ENCODE measurements at regions of chr17 and their contacts with region 1.

Region 1: DNA sequence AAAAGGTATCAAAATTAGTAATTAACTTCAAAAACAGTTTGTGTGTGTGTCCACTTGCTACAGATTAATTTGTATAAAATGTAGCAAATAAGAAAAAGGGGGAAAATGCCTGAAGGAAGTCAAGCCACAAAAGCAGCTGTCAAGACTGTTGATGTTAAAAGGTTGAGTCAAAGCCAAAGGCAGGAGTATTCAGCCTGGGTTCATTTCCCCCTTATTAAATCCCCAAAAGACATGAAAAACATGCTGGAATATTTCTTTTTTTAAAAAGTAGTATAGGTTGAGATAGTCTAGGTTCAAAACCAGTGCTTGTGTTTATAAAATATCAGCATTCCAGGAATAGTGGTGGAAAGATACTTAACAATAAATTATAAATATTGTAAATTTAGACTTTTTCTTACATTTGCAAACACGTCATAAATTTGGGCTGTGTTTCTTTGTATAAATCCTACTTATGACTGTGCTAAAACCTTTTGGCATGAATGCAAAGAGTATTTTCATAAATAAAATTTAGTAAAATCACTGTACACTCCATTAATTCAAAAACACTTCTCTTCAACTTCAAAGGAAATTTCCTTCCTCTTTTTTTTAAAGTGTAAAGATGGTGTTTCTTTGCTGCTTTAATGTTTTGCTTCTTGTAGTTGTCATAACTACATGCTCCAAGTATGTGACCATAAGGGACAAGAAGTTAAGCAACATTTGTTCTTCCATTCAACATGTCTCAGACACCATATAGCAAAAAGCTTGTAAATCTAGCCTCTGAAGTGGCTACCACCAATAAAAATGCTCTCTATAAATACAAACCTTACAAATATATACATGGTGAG is 72.0 kb downstream of the SKAP1 start:
- DNase-seq: no peak
- H3K4me3 ChIP-seq: no peak overlapping the region
- H3K27ac ChIP-seq: no peak overlapping the region
- H3K4me1 ChIP-seq: no peaks in the 10 kb centered on the region
- H3K27me3 ChIP-seq: peaks cover 2% of the 10 kb centered on the region
- CTCF ChIP-seq: no peak

Region 2: GRCh38 chr17:48134912-48135480 is 223.0 kb before region 1 on chr17:
- CTCF ChIA-PET with region 1: no interaction called
- dilution Hi-C with region 1: no loop called
- in situ Hi-C with region 1: no loop called
- intact Hi-C with region 1: no loop called
- DNase-seq: no peak
- H3K4me3 ChIP-seq: no peak overlapping the region
- H3K27ac ChIP-seq: no peak overlapping the region
- H3K4me1 ChIP-seq: no peaks in the 10 kb centered on the region
- H3K27me3 ChIP-seq: no peaks in the 10 kb centered on the region
- CTCF ChIP-seq: peak in 1 of 2 donors; percentile 18

Region 3: DNA sequence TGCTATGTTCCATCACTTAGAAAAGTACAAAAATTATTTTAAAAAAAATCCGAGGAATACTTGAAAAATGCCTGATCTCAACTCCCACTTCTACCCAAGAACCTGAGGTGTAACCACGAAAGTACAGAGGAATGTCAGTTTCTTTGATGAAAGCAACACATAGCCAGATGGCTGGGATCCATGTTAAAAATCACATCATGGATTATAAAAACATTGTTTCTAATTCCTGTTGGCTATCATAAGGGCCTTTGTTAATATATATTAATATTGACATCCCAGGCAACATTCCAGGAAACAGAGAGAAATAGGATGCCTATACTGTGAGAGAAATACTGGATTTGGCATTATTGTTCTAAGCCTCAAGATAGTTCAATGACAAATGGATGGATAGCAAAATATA is 43.3 kb before region 1 on chr17:
- CTCF ChIA-PET with region 1: no interaction called
- dilution Hi-C with region 1: loop called (anchors 5 kb)
- in situ Hi-C with region 1: no loop called
- intact Hi-C with region 1: no loop called
- DNase-seq: no peak
- H3K4me3 ChIP-seq: no peak overlapping the region
- H3K27ac ChIP-seq: no peak overlapping the region
- H3K4me1 ChIP-seq: no peaks in the 10 kb centered on the region
- H3K27me3 ChIP-seq: peaks cover 13% of the 10 kb centered on the region
- CTCF ChIP-seq: no peak

Region 4: DNA sequence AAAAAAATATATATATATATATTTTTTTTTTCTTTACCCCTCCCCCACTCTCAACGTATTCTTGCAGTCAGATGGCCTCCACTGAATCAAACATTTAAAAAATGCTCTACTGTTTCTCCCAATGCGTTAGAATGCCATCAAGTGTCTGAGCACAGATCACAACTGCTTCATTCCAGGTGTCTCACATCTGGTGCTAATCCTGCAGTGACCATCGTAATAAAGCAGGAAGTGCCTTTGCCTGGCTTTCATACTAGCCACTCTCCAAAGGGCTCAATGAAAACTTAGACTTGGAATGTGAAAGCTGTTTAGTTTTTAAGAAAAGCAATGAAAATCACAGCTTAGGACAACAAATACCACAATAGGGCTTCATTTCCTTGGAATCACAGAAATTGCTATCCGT is 34.9 kb after region 1 on chr17:
- CTCF ChIA-PET with region 1: no interaction called
- dilution Hi-C with region 1: no loop called
- in situ Hi-C with region 1: no loop called
- intact Hi-C with region 1: no loop called
- DNase-seq: no peak
- H3K4me3 ChIP-seq: no peak overlapping the region
- H3K27ac ChIP-seq: no peak overlapping the region
- H3K4me1 ChIP-seq: no peaks in the 10 kb centered on the region
- H3K27me3 ChIP-seq: peaks cover 2% of the 10 kb centered on the region
- CTCF ChIP-seq: no peak

Region 5: DNA sequence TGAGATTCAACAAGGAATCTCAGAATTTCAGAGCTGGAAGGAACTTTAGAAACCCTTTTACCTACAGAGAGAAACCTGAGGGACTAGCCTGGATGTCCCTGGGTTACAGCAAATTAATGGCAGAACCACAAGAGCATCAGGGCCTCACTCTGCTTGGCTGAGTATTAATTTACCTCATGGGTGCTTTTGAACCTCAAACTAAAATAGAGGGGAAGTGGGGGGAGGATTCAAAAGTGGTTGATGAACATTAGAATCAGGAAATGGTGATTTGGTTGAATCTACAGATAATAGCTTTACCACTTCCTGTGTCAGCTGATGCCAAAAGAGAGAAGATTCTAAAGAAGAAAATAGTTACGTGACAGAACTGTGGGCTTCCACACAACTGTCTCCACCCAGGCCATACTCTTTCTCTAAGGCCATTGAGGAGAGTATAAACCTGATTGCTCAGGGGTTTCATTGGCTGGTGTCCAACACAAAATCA is 83.3 kb after region 1 on chr17:
- CTCF ChIA-PET with region 1: no interaction called
- dilution Hi-C with region 1: loop called (anchors 5 kb)
- in situ Hi-C with region 1: no loop called
- intact Hi-C with region 1: no loop called
- DNase-seq: no peak
- H3K4me3 ChIP-seq: no peak overlapping the region
- H3K27ac ChIP-seq: no peak overlapping the region
- H3K4me1 ChIP-seq: no peaks in the 10 kb centered on the region
- H3K27me3 ChIP-seq: no peaks in the 10 kb centered on the region
- CTCF ChIP-seq: no peak

Measured in mammary epithelial cell (primary cell).